GM13976 (cell line): ENCODE measurements at regions of chr2 and their contacts with region 1.

Region 1: DNA sequence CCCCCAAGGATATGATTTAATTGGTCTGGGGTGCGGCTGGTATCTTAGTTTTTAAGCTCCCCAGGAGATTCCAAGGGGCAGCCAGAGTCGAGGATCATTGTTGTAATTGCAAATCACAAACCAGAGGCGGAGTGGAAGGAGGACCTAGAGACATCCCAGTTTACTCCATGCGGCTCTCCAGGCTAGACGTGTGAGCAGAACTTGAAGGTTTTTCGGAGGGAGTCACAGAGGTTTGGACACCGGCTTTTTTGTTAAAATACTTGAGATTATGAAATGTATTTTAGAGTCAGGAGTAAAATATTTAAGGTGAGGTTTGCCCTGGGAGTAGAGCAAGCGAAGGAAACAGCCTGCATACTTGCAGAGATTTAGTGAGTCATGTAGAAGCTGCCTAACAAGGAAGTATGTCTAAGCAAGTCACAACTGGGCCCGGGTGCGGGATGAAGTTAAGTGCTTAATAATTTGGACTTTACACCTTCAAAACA is 39.5 kb downstream of the TGOLN2 start:
- DNase-seq: no peak
- CTCF ChIP-seq: no peak

Region 2: GRCh38 chr2:85066874-85067351 is 221.4 kb before region 1 on chr2:
- in situ Hi-C with region 1: loop called (anchors 10 kb)
- DNase-seq: peak; percentile 66
- CTCF ChIP-seq: peak; percentile 57